Activated CD4-positive, alpha-beta T cell treated with anti-CD3 and anti-CD28 coated beads, Interleukin-2, amount 10 ng/mL, durations not matched to agents 24 days and 14 days (primary cell): ENCODE measurements at regions of chr4 and their contacts with region 1.

Region 1: DNA sequence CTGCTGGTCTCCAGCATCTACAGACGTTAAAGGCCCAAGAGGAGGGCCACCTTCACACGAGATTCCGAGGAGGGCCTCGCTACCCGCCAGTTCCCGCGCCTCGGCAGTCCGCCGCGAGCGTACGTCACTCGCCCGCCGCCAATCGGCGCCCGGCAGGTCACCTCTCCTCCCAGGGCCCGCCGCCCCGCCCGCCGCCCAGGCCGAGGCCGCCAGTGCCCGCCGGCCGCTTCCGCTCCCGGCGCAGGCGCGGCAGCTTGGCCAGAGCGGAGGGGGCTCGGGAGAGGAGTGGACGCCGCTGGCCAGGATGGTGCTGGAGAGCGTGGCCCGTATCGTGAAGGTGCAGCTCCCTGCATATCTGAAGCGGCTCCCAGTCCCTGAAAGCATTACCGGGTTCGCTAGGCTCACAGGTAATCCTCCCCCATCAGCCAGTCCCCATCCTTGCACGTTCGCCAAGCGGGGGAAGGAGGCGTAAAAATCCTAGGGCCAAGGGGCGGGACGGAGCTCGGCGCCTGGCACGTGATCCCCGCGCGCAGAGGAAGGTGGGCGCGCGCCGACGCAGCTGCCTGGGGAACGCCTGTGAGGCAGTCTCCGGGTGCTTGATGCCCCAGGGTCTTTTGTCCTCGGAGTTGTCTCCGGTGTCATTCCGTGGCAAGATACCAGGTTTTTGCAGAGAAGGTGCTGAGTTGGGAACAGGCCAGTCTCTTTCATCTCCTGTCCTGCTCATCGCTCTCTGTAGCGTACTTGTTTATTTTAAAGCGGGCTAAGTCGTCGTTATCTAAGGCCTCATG is at the start of gene CISD2:
- DNase-seq: peak; percentile 98
- H3K4me3 Mint-ChIP-seq: peak within 1 kb of the TSS; percentile 93
- H3K27ac Mint-ChIP-seq: peak within 1 kb of the TSS; percentile 99
- H3K4me1 Mint-ChIP-seq: peaks cover 56% of the 10 kb centered on the region
- H3K27me3 Mint-ChIP-seq: no peaks in the 10 kb centered on the region
- total RNA-seq, gene CISD2: 43.9 and 48.5 TPM in 2 replicates

Region 2: DNA sequence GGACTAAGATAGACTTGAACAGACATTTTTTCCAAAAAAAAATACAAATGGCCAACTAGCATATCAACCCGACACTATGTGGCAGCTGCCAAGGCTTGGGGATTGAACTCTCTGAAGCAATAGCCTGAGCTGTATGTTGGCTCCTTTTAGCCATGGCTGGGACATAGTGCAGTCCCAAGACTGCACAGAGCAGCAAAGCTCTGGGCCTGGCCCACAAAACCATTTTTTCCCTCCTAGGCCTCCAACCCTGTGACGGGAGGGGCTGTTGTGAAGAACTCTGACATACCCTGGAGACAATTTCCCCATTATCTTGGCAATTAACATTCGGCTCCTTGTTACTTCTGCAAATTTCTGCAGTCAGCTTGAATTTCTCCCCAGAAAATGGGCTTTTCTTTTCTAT is 49.9 kb after region 1 on chr4:
- intact Hi-C with region 1: no loop called
- DNase-seq: no peak
- H3K4me3 Mint-ChIP-seq: no peak overlapping the region
- H3K27ac Mint-ChIP-seq: no peak overlapping the region
- H3K4me1 Mint-ChIP-seq: no peaks in the 10 kb centered on the region
- H3K27me3 Mint-ChIP-seq: no peaks in the 10 kb centered on the region

Region 3: DNA sequence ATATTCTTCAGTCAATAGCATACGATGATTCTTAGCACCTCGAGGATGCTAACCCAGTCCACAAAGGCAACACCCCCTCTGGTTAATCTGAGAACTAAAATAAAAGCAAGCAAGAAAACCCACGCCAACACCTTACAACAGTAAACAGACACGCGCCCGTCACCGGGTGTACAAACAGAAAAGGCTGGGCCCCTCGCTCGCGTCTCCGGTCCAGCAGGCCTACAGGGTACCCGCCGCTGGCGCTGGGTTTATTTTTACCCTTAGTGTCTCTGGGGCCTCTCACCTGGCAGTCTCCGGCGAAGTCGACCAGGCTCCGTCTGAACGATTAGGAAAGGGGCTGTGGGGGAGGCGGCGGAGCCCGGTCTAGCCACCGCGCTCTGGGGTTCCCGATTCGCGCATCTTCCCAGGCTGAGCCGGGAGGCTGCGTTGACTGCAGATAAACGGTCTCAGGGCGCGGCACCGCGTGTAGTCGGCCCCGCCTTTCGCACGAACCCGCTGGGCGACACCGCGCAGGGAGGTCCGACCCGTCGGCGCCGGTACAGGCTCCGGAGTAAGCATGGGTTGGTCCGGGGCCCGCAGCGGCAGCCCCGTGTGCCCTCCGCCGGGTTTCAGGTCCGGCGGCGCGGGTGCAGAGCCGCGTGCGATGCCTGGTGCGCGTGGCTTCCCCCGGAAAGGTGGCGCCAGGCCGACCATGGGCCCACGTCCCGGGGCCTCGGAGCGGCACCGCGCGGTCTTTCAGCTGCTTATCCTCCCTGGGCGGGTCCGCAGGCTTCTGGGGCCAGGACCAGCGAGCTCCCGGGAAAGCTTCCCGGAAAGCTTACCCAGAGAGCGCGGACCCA is 207.1 kb after region 1 on chr4:
- intact Hi-C with region 1: loop called (anchors 1 kb)
- DNase-seq: peak; percentile 90
- H3K4me3 Mint-ChIP-seq: peak overlapping the region; percentile 88
- H3K27ac Mint-ChIP-seq: peak overlapping the region; percentile 96
- H3K4me1 Mint-ChIP-seq: peaks cover 37% of the 10 kb centered on the region
- H3K27me3 Mint-ChIP-seq: no peaks in the 10 kb centered on the region